ENCODE measurements at regions of chr2 and their contacts with region 1.

Region 1: DNA sequence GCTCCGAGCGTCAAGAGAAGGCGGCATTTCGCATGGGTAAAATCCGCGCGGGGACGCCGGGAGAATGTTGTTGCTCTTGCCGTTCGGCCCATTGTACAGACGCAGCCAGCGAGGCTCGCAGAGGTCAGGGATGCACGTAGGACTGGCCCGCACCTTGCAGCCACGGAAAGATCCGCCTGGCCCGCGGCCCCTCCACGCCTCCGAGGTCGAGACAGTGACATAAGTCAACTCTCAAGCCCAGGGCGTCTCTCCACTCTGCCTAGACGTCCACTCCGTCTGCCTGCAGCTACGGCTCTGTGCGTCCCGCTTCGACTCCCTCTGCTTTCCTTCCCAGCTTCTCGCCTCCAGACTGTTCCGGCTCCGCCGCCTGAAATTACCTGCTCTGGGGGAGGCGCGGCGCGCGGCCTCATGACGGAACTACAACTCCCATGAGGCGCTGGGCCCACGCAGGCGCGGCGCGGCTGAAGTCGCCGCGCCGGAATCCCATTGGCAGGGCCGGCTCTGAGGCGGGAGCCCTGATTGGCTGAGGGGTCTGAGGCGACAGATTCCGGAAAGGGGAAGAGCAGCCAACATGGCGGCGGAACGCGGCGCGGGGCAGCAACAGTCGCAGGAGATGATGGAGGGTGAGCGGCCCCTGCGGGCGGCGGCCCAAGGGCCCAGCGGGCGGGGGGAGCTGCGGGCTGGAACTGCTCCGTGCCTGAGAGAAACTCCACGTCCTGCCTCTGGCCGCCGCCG is at the start of gene PPP1R7:
- DNase-seq: peak; percentile 97
- H3K4me3 Mint-ChIP-seq: peak within 1 kb of the TSS; percentile 96
- H3K27ac Mint-ChIP-seq: peak within 1 kb of the TSS; percentile 85
- H3K4me1 Mint-ChIP-seq: peaks cover 44% of the 10 kb centered on the region
- H3K27me3 Mint-ChIP-seq: no peaks in the 10 kb centered on the region
- total RNA-seq, gene PPP1R7: 91.2 to 93.8 TPM

Region 2: DNA sequence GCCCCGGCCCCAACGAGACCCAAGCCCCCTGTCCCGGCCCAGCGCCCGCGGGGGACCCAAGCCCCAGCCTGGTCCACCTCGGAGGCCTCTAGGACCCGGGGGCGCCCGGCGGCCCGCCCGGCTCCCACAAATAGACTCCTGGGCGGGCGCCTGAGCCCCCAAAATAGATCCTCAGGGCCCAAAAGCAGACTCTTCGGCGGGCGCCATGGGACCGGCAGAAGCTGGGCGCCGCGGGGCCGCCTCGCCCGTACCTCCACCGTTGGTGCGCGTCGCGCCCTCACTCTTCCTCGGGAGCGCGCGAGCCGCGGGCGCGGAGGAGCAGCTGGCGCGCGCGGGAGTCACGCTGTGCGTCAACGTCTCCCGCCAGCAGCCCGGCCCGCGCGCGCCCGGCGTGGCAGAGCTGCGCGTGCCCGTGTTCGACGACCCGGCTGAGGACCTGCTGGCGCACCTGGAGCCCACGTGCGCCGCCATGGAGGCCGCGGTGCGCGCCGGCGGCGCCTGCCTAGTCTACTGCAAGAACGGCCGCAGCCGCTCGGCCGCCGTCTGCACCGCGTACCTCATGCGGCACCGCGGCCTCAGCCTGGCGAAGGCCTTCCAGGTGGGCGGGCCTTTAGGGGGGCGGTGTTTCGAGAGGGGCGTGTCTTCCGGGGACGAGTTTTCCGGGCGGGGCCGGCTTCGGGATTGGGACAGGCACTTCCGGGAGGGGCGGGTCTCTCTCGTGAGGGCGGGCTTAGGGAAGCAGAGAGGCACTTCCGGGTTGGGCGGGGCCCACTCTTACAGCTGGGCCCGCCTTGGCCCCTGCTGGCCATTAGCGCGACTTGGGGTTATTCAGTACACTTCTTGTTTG is 589.4 kb before region 1 on chr2:
- CTCF ChIA-PET with region 1: interaction called, 3 read pairs
- intact Hi-C with region 1: loop called (anchors 1 kb)
- DNase-seq: peak; percentile 100
- H3K4me3 Mint-ChIP-seq: peak overlapping the region; percentile 94
- H3K27ac Mint-ChIP-seq: peak overlapping the region; percentile 99
- H3K4me1 Mint-ChIP-seq: peaks cover 69% of the 10 kb centered on the region
- H3K27me3 Mint-ChIP-seq: no peaks in the 10 kb centered on the region

Region 3: GRCh38 chr2:241081643-241082340 is 68.3 kb before region 1 on chr2:
- CTCF ChIA-PET with region 1: interaction called, 15 read pairs
- intact Hi-C with region 1: loop called (anchors 1 kb)
- DNase-seq: no peak
- H3K4me3 Mint-ChIP-seq: no peak overlapping the region
- H3K27ac Mint-ChIP-seq: peak overlapping the region; percentile 24
- H3K4me1 Mint-ChIP-seq: peaks cover 7% of the 10 kb centered on the region
- H3K27me3 Mint-ChIP-seq: no peaks in the 10 kb centered on the region

Region 4: DNA sequence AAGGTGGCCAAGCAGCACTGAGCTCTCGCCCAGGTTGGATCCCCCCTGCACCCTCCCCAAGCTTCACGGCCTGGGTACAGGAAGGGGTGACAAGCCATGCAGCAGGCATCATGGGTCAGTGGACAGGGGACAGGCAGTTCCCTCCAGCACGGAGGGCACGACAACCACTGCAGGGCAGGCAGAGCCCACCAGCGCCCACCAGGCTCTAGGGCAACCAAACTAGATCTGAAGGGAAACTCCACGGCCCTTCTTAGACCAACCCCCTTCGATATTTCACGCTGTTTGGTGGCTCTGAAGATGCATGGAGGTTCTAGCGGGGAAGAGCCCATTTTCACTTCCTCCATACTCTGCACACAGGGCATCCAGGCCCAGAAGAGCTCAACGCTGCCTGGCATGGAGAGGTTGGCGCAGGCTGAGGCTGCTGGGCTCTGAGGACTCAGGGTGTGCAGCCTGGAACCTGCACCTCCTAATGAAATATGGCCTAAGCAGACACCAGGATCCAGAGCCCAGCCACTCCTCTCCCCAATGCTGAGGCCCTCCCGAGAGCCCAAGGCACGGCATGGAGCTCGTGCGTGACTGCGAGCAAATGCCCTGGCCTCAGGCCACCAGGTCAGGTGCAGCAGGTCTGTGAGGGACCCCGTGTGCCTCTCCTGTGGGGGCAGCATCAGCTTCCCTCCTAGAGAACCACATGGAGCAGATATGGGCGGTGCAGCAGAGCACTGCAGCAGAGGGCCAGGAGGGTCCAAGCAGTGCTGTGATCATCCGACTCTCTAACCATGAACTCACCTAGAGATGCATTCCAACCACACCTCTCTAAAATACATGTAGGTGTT is 39.3 kb before region 1 on chr2:
- CTCF ChIA-PET with region 1: no interaction called
- intact Hi-C with region 1: no loop called
- DNase-seq: no peak
- H3K4me3 Mint-ChIP-seq: peak overlapping the region; percentile 70
- H3K27ac Mint-ChIP-seq: peak overlapping the region; percentile 92
- H3K4me1 Mint-ChIP-seq: peaks cover 48% of the 10 kb centered on the region
- H3K27me3 Mint-ChIP-seq: no peaks in the 10 kb centered on the region

Region 5: GRCh38 chr2:241125626-241126025 is 24.5 kb before region 1 on chr2:
- CTCF ChIA-PET with region 1: no interaction called
- intact Hi-C with region 1: loop called (anchors 1 kb)
- DNase-seq: no peak
- H3K4me3 Mint-ChIP-seq: no peak overlapping the region
- H3K27ac Mint-ChIP-seq: no peak overlapping the region
- H3K4me1 Mint-ChIP-seq: peaks cover 38% of the 10 kb centered on the region
- H3K27me3 Mint-ChIP-seq: no peaks in the 10 kb centered on the region

Region 6: DNA sequence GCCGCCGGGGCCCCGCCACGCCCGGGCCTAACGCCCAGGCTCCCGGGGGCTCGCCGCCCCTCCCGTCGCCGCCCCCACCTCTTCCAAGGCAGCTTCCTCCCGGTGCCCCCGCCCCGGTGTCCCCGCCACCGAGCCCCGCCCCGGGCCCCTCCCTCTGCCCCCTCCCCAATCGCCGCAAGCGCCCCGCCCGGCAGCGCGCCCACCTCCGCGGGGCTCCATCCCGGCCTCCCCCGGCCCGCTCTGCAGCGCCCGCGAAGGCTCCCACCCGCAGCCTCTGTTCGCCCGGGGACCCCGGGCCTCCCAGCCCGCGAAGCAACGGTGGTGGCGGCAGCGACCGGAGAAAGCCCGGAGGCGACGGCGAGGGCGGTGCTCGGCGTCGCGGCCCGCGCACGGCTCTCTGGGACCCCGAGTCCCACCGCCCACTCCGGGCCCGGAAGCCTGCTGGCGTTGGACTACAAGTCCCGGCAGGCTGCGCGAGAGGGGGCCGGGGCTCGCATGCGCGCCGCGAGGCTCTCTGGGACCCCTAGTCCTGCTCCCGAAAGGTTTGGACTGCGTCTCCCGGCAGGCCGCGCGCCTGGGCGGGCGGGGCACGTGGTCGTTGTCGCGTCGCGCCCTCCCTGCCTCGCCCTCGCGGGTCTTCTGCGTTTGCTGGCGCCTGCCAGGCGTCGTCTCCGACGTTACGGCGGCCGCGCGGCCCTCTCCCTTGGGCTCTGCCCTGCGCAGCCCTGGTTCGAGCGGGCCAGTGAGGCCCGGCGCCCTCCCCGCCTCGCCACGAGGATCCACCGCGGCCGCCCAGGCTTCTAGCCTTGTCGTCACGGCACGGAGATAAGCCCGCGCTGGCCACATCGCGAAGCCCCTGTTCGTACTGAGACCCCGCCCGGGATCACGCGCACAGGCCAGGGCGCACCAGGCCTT is 358.4 kb after region 1 on chr2 and contains the start of gene STK25:
- CTCF ChIA-PET with region 1: no interaction called
- intact Hi-C with region 1: loop called (anchors 1 kb)
- DNase-seq: peak; percentile 98
- H3K4me3 Mint-ChIP-seq: peak within 1 kb of the TSS; percentile 79
- H3K27ac Mint-ChIP-seq: no peak within 1 kb of the TSS
- H3K4me1 Mint-ChIP-seq: peaks cover 21% of the 10 kb centered on the region
- H3K27me3 Mint-ChIP-seq: no peaks in the 10 kb centered on the region
- total RNA-seq, gene STK25: 81.2 to 88.4 TPM

Region 7: DNA sequence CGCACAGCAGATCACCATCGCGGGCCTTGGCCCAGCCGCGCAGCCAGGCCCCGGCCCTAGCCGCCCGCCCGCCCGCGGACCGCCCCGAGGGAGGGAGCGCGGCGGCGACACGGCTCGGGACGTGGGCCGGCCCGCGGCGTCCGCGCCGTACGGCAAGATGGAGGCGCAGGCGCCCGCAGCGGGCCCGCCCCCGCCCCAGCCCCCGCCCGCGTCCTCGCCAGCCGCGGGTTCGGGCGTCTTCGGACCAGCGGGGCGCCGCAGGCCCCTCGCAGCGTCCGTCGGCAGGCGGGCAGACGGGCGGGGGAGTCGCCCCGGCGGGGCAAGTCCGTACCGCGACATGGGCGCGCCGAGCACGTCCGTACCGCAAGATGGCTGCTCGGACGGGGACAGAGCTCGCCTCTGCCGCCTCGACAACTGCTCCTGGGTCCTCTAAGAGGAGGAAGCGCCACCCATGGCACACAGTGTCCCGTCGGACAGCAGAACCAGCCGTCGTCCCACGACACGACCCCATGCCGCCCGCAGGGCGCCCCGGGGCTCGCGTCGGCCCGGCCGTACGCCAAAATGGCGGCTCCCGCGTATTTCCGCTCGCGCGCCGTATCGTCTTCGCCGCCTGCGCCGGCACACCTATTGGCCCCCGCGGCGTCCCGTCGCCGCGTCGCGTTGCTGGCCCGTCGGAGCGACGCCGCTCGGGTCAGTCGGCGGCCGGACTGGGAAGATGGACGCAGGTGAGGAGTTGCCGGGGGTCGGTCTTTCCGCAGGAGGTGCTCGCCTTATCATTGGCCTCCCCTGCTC is 487.1 kb after region 1 on chr2 and contains the starts of genes ATG4B and THAP4:
- CTCF ChIA-PET with region 1: no interaction called
- intact Hi-C with region 1: loop called (anchors 1 kb)
- DNase-seq: peak; percentile 76
- H3K4me3 Mint-ChIP-seq: peak within 1 kb of the TSS; percentile 84
- H3K27ac Mint-ChIP-seq: peak within 1 kb of the TSS; percentile 80
- H3K4me1 Mint-ChIP-seq: peaks cover 54% of the 10 kb centered on the region
- H3K27me3 Mint-ChIP-seq: no peaks in the 10 kb centered on the region
- total RNA-seq, gene ATG4B: 71.5 to 82.5 TPM
- total RNA-seq, gene THAP4: 36.4 to 38.8 TPM

Region 8: GRCh38 chr2:241702132-241703031 is 552.3 kb after region 1 on chr2:
- CTCF ChIA-PET with region 1: no interaction called
- intact Hi-C with region 1: loop called (anchors 2 kb)
- DNase-seq: peak; percentile 82
- H3K4me3 Mint-ChIP-seq: peak overlapping the region; percentile 82
- H3K27ac Mint-ChIP-seq: peak overlapping the region; percentile 61
- H3K4me1 Mint-ChIP-seq: peaks cover 24% of the 10 kb centered on the region
- H3K27me3 Mint-ChIP-seq: no peaks in the 10 kb centered on the region

Measured in activated naive CD4-positive, alpha-beta T cell treated with anti-CD3 and anti-CD28 coated beads for 36 hours (primary cell).